ENCODE measurements at regions of chr13 and their contacts with region 1.

Region 1: DNA sequence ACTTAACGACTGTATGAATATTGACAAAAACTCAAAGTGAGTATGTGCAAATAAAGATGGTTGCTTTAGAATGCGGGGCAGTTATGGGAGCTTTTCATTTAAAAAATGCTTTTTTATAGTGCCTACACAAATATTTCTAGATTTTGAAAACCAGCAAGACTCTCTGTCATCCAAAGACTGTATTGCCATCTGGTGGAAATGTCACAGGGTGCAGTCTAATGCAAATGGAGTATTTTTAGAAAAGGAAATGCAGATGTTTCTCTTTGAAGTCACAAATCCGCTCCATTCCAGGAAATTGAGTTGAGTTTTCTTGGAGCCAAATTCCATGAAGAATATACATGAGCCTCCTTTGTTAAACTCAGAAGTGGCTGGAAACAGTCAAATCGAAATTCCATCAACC is 2.3 kb upstream of the C1QTNF9B start:
- DNase-seq: peak; percentile 41
- ATAC-seq: peak; percentile 62
- H3K4me3 ChIP-seq: no peak overlapping the region
- H3K4me3 Mint-ChIP-seq: no peak overlapping the region
- H3K27ac ChIP-seq: no peak overlapping the region
- H3K27ac Mint-ChIP-seq: no peak overlapping the region
- H3K4me1 ChIP-seq: peaks cover 9% of the 10 kb centered on the region in 2 donors
- H3K4me1 Mint-ChIP-seq: peaks cover 4% of the 10 kb centered on the region
- H3K27me3 ChIP-seq: peaks cover 0 to 36% (median 28%) of the 10 kb centered on the region in 4 experiments
- H3K27me3 Mint-ChIP-seq: peaks cover 23% of the 10 kb centered on the region
- CTCF ChIP-seq: peak; percentile 72

Region 2: DNA sequence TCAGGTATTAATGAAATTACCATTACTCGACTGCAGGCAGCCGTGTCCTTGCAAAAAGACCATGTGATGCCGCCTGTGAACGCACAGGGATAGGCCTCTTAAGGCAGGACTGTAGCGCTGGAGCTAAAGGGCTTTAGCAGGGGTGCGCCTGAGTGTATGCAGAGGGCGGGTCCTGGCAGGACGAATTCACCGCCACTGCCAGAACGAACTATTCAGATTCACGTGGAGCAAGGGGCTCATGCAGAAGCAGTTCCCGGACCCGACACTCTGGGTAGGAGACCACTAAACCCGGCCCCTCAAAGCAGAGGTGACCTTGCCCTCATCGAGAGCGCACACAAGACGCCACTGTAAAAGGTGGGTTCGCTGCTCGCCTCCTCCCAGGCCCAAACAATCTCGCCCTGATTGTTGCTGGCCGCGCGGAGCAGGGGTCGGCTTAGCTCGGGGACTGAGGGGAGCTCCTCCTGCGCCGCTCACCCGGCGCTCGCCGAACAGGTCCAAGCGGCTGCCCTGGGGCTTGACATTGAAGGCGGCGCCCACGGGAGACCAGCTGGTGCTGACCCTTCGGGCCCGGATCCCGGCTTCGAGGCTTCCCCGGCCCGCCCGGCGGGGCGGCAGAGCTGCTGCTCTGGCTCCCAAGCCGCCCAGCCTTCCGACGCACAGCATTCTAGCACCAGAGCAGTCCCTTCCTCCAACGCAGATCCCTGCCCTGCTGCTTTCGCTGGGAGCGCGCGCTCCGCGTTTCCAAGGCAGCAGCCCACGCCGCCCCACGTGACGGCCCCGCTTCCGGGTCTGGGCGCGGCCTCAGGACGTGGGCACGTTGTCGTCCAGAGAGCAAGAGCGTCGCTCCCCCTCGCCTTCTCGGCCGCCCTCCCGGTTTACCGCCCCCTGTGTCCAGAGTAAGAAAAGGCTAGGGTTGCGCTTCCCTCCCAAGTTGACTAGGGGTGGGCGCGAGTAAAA is 10.6 kb before region 1 on chr13 and contains the start of gene MIPEP:
- CTCF ChIA-PET with region 1: interaction called, 23 read pairs
- POLR2A ChIA-PET with region 1: no interaction called
- intact Hi-C with region 1: no loop called
- DNase-seq: peak; percentile 92
- ATAC-seq: peak; percentile 93
- H3K4me3 ChIP-seq: peak within 1 kb of the TSS; percentile 24 to 96 (median 80)
- H3K4me3 Mint-ChIP-seq: peak within 1 kb of the TSS; percentile 94
- H3K27ac ChIP-seq: peak within 1 kb of the TSS; percentile 42 to 86
- H3K27ac Mint-ChIP-seq: peak within 1 kb of the TSS; percentile 95
- H3K4me1 ChIP-seq: peaks cover 12 to 17% of the 10 kb centered on the region in 2 donors
- H3K4me1 Mint-ChIP-seq: peaks cover 23% of the 10 kb centered on the region
- H3K27me3 ChIP-seq: no peaks in the 10 kb centered on the region
- H3K27me3 Mint-ChIP-seq: no peaks in the 10 kb centered on the region
- CTCF ChIP-seq: peak; percentile 69
- total RNA-seq, gene MIPEP: 15.7 and 16.9 TPM in 2 replicates

Region 3: DNA sequence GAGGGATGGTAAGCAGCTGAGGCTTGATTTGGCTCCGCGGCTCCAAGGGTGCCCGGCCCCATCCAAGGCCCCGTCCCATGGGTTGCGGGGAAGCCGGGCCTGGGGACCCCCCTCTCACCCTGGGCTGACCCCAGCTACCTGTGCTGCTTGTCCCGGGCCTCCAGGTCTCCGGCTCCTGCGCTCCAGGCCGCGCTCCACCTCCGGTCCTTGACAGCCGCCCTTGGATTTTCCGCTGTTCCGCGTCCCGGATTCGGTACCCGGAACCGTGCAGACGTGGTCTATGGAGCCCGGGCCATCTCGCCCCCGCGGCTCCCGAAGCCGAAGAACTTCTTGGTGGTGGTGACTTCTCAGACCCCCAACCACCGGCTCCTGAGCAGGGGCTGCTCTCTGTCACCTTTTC is 46.1 kb after region 1 on chr13:
- CTCF ChIA-PET with region 1: no interaction called
- POLR2A ChIA-PET with region 1: no interaction called
- intact Hi-C with region 1: no loop called
- DNase-seq: no peak
- ATAC-seq: no peak
- H3K4me3 ChIP-seq: no peak overlapping the region
- H3K4me3 Mint-ChIP-seq: no peak overlapping the region
- H3K27ac ChIP-seq: no peak overlapping the region
- H3K27ac Mint-ChIP-seq: no peak overlapping the region
- H3K4me1 ChIP-seq: no peaks in the 10 kb centered on the region
- H3K4me1 Mint-ChIP-seq: no peaks in the 10 kb centered on the region
- H3K27me3 ChIP-seq: peaks cover 0 to 8% (median 0%) of the 10 kb centered on the region in 4 experiments
- H3K27me3 Mint-ChIP-seq: peaks cover 8% of the 10 kb centered on the region
- CTCF ChIP-seq: no peak